GM10248 (cell line): ENCODE measurements at regions of chr11 and their contacts with region 1.

Region 1: DNA sequence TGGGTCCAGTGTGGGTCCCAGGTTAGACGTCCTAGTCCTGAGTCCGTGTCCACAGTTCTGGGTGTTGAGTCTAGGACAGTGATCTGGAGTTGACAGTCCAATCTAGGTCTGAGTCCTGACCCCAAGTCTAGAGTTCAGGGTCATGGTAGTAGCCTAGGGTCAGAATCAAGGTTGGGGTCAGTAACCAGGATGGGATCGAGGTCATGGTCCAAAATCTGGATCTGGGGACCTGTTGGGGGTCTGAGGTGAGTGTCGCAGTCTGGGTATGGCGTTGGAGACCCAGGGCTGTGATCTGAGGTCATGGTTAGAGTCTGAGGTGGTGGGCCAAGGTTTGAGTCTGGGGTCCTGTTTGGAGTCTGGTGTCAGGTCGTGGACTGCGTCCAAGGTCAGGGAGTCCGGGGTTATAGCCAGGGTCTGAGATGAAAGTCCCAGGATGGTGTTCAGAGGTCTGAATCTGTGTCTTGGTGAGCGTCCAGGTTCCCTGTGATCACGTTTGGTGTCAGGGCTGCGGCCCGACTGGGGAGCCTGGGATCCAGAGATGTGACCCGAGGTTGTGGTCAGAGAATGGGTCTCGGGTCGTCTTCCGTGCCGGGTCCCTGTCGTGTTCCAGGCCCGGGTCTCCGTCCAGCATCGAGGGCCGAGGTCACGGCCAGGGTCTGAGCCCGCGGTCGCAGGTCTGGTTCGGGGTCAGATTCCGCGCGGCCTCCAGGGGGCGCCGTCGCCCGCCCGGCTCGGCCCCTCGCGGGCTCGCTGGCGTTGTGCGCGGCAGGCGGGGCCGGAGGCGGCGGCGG is 445 bp upstream of the GRK2 start:
- DNase-seq: peak; percentile 89
- CTCF ChIP-seq: peak; percentile 93

Region 2: DNA sequence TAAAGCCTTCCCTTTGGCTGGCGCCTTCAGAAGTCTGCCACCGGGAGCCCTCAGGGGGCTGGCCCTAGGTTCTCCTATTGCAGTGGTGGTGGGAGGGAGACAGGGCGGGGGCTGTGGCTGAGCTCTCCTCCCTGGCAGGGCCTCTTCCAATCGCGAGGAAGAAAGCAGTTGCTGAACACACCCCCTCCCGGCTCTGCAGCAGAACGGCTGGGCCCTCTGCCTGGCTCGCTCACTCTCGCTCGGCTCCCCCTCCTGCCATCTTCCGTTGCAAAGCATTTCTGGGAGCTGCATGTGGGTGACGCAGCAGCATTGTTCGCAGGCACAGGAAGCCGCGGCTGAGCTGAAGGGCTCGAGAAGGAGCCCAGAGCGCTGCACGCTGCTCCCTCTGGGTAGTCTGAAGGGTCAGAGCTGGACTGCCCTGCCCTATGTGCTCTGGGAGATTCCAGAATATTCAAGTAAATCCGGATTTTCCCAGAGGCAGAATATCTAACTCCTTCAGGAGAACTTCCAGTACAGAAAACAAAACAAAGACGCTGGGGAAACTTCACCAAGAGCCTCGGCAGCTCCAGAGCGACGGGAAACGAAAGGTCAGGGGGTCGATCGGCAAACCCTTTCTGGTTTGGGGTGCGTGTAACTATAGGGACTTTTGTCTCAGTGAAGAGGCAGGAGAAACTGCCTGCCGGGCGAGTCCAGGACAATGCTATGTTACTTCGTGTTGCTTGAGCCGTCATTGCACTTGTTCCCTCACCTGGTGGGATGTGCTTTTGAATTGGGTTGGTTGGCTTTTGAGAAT is 25.8 kb before region 1 on chr11:
- CTCF ChIA-PET with region 1: interaction called, 118 read pairs
- POLR2A ChIA-PET with region 1: interaction called, 12 read pairs
- DNase-seq: peak; percentile 91
- CTCF ChIP-seq: peak; percentile 13

Region 3: DNA sequence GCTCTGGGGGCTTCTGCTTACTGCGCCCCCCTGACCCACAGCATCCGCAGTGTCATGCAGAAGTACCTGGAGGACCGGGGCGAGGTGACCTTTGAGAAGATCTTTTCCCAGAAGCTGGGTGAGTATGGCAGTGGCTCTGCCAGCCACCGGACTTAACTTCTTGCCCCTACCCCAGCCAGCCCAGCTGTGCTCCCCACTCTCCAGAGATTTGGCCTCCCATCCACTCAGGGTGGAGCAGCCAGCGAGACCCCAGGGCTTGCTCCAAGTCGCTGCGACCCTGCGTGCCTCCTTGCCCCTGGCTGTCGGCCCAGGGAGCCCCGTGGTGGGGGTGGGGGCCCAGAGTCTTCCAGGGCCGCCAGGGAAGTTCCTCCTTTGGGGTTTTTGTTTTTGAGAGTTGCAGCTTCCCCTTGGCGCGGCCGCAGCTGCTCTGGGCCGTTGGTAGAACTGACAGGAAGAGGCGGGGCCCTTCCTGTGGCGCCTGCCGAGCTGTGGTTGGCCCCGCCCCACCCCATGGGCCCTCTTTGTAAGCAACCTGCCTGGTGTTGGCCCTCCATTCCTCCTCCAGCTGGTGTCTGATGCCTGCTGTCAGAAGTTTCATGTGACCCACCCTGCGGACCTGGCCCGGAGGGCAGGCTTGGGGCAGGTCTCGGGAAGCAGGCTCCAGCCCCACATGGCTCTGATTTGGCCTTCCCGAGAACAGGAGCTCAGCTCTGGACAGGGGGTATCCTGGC is 11.6 kb after region 1 on chr11:
- CTCF ChIA-PET with region 1: interaction called, 22 read pairs
- POLR2A ChIA-PET with region 1: interaction called, 3 read pairs
- DNase-seq: peak; percentile 93
- CTCF ChIP-seq: no peak

Region 4: DNA sequence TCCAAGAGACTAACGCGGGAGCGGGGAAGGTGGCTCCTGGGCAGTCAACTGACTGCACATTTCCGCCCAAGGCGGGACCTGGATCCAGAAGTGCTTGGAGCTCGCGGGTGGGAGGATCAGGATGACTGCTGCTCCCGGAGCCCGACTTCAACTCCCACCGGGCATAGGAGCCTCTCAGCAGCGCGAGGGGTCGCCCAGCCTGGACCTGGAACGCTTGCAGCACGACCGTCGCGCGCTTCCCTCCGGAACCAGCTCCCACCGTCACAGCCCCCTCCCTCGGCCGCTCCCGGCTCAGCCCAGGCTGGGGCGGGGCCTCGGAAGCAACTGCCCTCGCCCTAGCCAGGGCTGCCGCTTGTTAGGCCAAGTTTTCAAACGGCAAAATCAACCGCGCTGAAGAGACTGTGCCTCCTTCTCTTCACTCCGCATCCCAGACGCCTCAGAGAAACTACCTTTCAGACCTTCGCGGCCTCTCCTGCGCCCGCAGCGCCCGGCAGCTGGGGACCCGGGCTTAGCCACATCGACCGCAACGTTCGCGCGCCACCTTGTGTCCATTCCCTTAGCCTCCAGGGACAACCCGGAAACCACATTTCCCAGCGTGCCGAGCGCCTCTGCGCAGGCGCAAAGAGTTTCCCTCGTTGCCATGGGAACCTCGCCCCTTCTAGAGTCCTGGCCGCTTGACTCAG is 51.5 kb after region 1 on chr11:
- CTCF ChIA-PET with region 1: interaction called, 124 read pairs
- POLR2A ChIA-PET with region 1: no interaction called
- DNase-seq: peak; percentile 100
- CTCF ChIP-seq: peak; percentile 91

Region 5: GRCh38 chr11:67353317-67354074 is 87.7 kb after region 1 on chr11 and contains the start of gene POLD4:
- CTCF ChIA-PET with region 1: interaction called, 17 read pairs
- POLR2A ChIA-PET with region 1: no interaction called
- DNase-seq: peak; percentile 98
- CTCF ChIP-seq: no peak

Region 6: DNA sequence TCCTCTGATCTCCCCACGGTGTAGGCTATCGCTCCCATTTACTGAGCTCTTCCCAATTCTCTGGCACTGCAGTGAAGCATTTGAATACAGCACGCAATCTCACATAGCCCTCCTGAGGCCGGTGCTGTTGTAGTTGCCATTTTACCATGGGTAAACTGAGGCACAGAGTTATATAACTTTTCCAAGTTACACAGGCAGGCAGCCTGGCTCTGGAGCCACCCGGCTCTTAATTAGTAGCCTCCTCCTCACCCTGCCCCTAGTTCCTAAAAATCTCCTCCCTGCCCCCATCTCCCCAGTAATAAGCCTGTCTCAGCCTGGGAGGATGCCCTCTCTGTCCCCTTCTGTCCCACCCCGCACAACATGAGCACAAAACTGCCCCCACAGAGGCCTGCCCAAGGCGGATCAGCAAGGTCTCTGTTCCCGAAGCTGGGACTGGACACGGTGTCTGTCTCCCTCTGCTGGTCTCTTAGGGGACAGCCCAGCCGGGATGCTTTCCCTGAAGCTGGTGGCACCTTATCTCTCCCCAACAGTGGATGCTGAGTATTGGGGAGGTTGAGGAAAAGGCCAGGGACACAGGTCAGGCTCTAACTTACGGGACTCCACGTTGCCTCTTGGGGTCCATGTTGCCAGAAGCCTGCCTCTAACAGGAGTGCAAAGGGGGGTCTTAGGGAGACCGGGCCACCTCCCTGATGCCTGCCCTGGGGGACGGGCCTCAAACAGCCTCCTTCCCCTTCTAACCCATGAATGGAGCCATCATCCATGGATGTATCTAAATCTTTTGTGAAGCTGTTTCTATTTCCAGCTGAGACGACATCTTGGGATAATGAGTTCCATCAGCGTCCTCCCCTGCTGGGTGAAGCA is 116.7 kb after region 1 on chr11:
- CTCF ChIA-PET with region 1: interaction called, 72 read pairs
- POLR2A ChIA-PET with region 1: no interaction called
- DNase-seq: peak; percentile 86
- CTCF ChIP-seq: peak; percentile 94

Region 7: GRCh38 chr11:67558084-67558781 is 292.4 kb after region 1 on chr11:
- CTCF ChIA-PET with region 1: no interaction called
- POLR2A ChIA-PET with region 1: no interaction called
- DNase-seq: peak; percentile 69
- CTCF ChIP-seq: no peak